Calu3 (cell line): ENCODE measurements at regions of chr15 and their contacts with region 1.

Region 1: DNA sequence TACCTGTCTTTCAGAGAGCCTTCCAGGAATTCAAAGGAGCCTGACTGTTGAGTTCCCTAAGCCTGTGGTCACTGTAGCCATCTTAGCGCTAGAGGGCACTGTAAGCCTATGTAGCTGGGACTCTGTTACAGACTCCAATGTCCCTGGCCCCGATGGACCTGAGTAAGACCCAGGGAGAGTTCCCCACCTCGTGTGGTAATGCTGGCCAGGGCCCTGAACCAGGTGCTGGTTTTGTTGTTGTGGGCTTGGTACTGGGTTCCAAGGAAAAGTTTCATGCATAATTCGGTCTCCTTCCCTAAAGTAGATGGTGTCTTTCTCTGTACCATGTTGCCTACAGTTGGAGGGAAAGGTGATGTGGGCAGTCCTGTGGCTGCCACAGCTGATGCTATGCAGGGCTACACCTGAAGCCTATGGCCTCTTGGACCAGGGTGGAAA is 32.4 kb downstream of the CDAN1 start:
- DNase-seq: peak; percentile 59
- H3K4me3 Mint-ChIP-seq: no peak overlapping the region
- H3K27ac Mint-ChIP-seq: no peak overlapping the region
- H3K4me1 Mint-ChIP-seq: no peaks in the 10 kb centered on the region
- H3K27me3 Mint-ChIP-seq: no peaks in the 10 kb centered on the region
- CTCF ChIP-seq: peak; percentile 14

Region 2: DNA sequence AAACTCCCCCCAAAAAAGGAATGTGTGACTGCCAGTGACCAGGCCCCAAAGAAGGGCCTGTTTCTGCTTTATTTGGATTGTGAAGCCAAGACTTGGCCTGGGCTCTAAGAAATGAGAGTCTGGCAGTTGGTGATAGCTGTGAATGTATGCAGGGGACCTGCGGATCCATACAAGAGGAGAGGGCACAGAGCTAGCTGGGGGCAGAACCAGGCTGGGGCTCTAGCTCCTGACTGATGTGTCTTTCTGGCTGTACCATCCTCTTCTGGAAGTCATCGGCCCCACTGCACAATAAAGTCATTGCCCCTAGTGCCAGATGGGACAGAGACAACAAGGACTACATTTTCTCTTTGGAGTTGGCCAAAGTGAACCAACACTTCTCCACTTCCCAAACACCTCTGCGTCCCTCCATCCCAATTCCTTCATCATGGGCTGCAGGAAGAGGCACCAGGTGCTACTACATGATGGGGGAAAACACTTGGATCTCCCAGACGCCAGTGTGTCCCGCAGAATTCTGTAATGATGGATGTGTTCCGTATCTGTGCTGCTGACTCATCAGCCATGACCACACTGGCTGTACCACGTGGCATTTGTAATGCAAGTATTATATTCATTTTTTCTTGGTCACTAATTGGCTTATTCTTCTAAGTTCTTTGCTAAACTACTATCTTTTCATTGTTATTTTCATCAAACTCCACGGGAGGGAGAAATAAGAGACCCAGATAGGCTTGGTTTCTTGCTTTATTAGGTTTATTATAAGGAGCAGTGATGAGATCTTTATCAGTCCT is 546.3 kb before region 1 on chr15:
- CTCF ChIA-PET with region 1: no interaction called
- intact Hi-C with region 1: no loop called
- DNase-seq: no peak
- H3K4me3 Mint-ChIP-seq: no peak overlapping the region
- H3K27ac Mint-ChIP-seq: no peak overlapping the region
- H3K4me1 Mint-ChIP-seq: no peaks in the 10 kb centered on the region
- H3K27me3 Mint-ChIP-seq: no peaks in the 10 kb centered on the region
- CTCF ChIP-seq: no peak

Region 3: DNA sequence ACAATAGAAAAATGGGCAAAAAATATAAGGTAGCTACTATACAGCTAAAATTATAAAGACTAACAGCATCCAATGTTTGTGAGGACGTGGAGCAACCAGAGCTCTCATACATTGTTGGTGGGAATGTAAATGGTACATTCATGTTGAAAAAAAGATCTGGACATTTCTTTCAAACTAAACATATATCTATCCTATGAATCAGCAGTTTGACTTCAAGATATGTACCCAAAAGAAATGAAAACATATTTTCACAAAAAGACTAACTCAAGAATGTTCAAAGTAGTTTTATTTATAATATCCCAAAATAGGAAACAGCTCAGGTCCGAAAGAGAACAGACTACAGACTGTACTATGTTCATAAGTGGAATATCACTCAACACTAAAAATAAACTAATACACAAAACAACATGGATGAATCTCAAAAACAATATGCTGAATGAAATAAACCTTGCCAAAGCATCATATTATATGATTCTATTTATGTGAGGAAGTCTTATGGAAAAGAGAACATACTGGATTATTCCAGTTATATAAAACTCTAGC is 224.9 kb after region 1 on chr15:
- CTCF ChIA-PET with region 1: interaction called, 4 read pairs
- intact Hi-C with region 1: loop called (anchors 5 kb)
- DNase-seq: no peak
- H3K4me3 Mint-ChIP-seq: no peak overlapping the region
- H3K27ac Mint-ChIP-seq: no peak overlapping the region
- H3K4me1 Mint-ChIP-seq: no peaks in the 10 kb centered on the region
- H3K27me3 Mint-ChIP-seq: no peaks in the 10 kb centered on the region
- CTCF ChIP-seq: no peak

Region 4: GRCh38 chr15:43204016-43204901 is 499.8 kb after region 1 on chr15:
- CTCF ChIA-PET with region 1: interaction called, 3 read pairs
- intact Hi-C with region 1: loop called (anchors 1 kb)
- DNase-seq: peak; percentile 46
- H3K4me3 Mint-ChIP-seq: no peak overlapping the region
- H3K27ac Mint-ChIP-seq: no peak overlapping the region
- H3K4me1 Mint-ChIP-seq: peaks cover 5% of the 10 kb centered on the region
- H3K27me3 Mint-ChIP-seq: peaks cover 71% of the 10 kb centered on the region
- CTCF ChIP-seq: peak; percentile 18